Activated T-helper 1 cell treated with anti-CD3 and anti-CD28 coated beads, Interleukin-12 subunit alpha, Interleukin-12 subunit beta, Interleukin-2, Interleukin-4 antibody, amounts not matched to agents 30 ng/mL and 10 ng/mL and 1 ng/mL, durations not matched to agents 14 hours and 24 hours and 36 hours (primary cell): ENCODE measurements at regions of chr7 and their contacts with region 1.

Region 1: GRCh38 chr7:66681491-66682349 is 53.0 kb downstream of the KCTD7 start:
- DNase-seq: peak; percentile 93
- H3K4me3 Mint-ChIP-seq: peak overlapping the region; percentile 93
- H3K27ac Mint-ChIP-seq: peak overlapping the region; percentile 96
- H3K4me1 Mint-ChIP-seq: peaks cover 21% of the 10 kb centered on the region
- H3K27me3 Mint-ChIP-seq: no peaks in the 10 kb centered on the region

Region 2: GRCh38 chr7:66542528-66543269 is 139.0 kb before region 1 on chr7:
- intact Hi-C with region 1: no loop called
- DNase-seq: no peak
- H3K4me3 Mint-ChIP-seq: no peak overlapping the region
- H3K27ac Mint-ChIP-seq: no peak overlapping the region
- H3K4me1 Mint-ChIP-seq: no peaks in the 10 kb centered on the region
- H3K27me3 Mint-ChIP-seq: no peaks in the 10 kb centered on the region

Region 3: DNA sequence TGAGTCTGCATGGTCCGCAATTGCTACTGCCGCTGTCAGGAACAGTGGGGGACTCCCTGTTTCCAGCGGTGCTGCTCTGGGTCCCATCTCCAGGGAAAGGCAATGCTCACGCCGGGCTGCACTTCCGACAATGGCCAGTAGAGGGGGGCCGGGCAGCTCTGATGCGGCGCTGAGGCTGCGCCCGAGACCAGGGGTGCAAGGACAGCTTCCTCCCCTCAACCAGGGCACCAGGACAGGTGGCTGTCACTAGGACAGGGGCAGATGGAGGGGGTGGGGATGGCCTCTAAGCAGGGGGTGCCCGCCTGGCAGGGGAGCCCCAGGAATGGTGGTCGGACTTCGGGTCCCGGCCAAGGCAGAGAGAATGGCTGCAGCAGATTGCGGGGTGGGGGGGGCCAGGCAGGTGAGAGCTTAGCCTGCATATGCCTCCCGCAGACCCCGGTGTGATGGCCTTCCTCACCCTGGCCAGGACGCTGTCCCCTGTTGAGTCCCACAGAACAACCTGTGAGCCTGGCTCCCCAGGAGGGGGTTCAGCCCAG is 124.0 kb before region 1 on chr7:
- intact Hi-C with region 1: loop called (anchors 2 kb)
- DNase-seq: peak; percentile 62
- H3K4me3 Mint-ChIP-seq: no peak overlapping the region
- H3K27ac Mint-ChIP-seq: no peak overlapping the region
- H3K4me1 Mint-ChIP-seq: no peaks in the 10 kb centered on the region
- H3K27me3 Mint-ChIP-seq: no peaks in the 10 kb centered on the region

Region 4: GRCh38 chr7:66591799-66592596 is 89.7 kb before region 1 on chr7:
- intact Hi-C with region 1: loop called (anchors 1 kb)
- DNase-seq: peak; percentile 87
- H3K4me3 Mint-ChIP-seq: peak overlapping the region; percentile 96
- H3K27ac Mint-ChIP-seq: peak overlapping the region; percentile 93
- H3K4me1 Mint-ChIP-seq: peaks cover 46% of the 10 kb centered on the region
- H3K27me3 Mint-ChIP-seq: peaks cover 3% of the 10 kb centered on the region

Region 5: GRCh38 chr7:66628361-66629140 is 53.2 kb before region 1 on chr7 and contains the start of gene KCTD7:
- intact Hi-C with region 1: loop called (anchors 1 kb)
- DNase-seq: peak; percentile 94
- H3K4me3 Mint-ChIP-seq: peak within 1 kb of the TSS; percentile 90
- H3K27ac Mint-ChIP-seq: peak within 1 kb of the TSS; percentile 83
- H3K4me1 Mint-ChIP-seq: peaks cover 39% of the 10 kb centered on the region
- H3K27me3 Mint-ChIP-seq: no peaks in the 10 kb centered on the region
- total RNA-seq, gene KCTD7: 11.0 and 13.8 TPM in 2 replicates

Region 6: GRCh38 chr7:66654123-66654732 is 27.5 kb before region 1 on chr7:
- intact Hi-C with region 1: loop called (anchors 1 kb)
- DNase-seq: peak; percentile 98
- H3K4me3 Mint-ChIP-seq: peak overlapping the region; percentile 94
- H3K27ac Mint-ChIP-seq: peak overlapping the region; percentile 94
- H3K4me1 Mint-ChIP-seq: peaks cover 15% of the 10 kb centered on the region
- H3K27me3 Mint-ChIP-seq: no peaks in the 10 kb centered on the region

Region 7: GRCh38 chr7:66740302-66740979 is 58.7 kb after region 1 on chr7 and contains the start of gene RABGEF1:
- intact Hi-C with region 1: loop called (anchors 1 kb)
- DNase-seq: peak; percentile 98
- H3K4me3 Mint-ChIP-seq: peak within 1 kb of the TSS; percentile 95
- H3K27ac Mint-ChIP-seq: peak within 1 kb of the TSS; percentile 94
- H3K4me1 Mint-ChIP-seq: peaks cover 15% of the 10 kb centered on the region
- H3K27me3 Mint-ChIP-seq: no peaks in the 10 kb centered on the region
- total RNA-seq, gene RABGEF1: 26.7 and 27.8 TPM in 2 replicates

Region 8: DNA sequence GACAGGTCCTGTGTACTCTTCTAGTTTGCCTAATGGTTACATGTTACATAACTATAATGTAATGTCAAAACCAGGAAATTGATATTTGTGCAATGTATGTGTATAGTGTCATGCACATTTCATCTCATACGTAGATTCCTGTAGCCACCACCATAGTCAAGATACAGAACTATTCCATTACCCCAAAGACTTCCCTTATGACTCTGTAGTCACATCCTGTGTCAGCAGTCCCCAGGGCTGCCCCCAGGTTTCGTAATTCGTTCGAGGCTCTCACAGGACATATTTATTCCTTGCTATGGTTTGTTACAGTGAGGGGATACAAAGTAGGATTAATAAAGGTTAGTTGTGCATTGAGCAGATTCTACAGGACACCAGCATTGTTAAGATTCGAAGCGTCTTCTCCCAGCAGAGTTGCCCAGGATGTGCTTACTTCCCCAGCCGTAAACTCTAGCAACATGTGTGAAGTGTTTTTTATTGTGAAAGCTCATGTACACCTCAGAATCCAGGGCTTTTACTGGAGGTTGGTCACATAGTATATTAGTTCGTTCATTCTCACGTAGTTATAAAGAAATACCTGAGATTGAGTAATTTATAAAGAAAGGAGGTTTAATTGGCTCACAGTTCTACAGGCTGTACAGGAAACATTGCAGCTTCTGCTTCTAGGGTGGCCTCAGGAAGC is 77.4 kb after region 1 on chr7:
- intact Hi-C with region 1: loop called (anchors 5 kb)
- DNase-seq: no peak
- H3K4me3 Mint-ChIP-seq: peak overlapping the region; percentile 4
- H3K27ac Mint-ChIP-seq: peak overlapping the region; percentile 73
- H3K4me1 Mint-ChIP-seq: peaks cover 33% of the 10 kb centered on the region
- H3K27me3 Mint-ChIP-seq: no peaks in the 10 kb centered on the region

Region 9: DNA sequence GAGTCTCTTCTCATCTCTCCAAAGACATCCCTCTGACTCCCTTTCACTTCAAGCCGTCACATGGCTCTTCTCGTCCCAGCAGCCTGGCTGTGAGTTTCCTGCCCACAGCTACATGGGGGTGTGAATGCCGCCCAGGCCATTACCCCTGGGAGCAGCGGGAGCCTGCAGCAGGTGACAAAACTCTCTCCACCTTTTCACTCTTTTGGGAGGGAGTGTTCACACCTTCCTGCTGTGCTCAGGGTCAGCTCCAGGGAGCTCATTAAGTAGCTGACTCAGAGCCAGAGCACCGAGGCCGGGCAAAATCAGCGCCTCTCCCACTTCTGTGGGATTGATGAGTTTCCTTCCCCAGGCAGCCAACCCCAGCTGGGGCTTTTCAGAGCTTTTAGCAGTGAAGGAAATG is 586.2 kb after region 1 on chr7:
- intact Hi-C with region 1: no loop called
- DNase-seq: no peak
- H3K4me3 Mint-ChIP-seq: no peak overlapping the region
- H3K27ac Mint-ChIP-seq: no peak overlapping the region
- H3K4me1 Mint-ChIP-seq: no peaks in the 10 kb centered on the region
- H3K27me3 Mint-ChIP-seq: no peaks in the 10 kb centered on the region